ENCODE measurements at regions of chrX and their contacts with region 1.

Region 1: DNA sequence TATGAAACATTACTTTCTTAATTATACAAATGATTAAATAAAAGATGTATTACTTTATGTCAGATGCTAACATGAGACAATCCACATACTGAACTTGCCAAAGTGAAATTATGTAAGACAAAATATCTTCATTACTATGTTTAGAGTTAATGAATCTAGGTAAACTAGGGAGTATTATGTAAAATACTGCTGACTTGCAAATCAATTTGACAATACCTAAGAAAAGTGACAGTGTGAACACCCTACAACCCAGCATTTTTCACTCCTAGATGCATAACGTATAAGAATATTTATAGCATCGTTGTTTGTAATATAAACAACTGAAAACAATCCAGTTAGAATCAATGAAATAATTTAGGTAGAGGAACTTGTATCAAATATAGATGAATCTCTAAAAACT is 546.3 kb downstream of the MAGEB5 start:
- DNase-seq: no peak
- H3K4me3 ChIP-seq: no peak overlapping the region
- H3K27ac ChIP-seq: no peak overlapping the region
- H3K4me1 ChIP-seq: no peaks in the 10 kb centered on the region
- H3K27me3 ChIP-seq: no peaks in the 10 kb centered on the region
- CTCF ChIP-seq: no peak
- POLR2A ChIP-seq: no peak

Region 2: GRCh38 chrX:26778320-26778888 is 16.2 kb after region 1 on chrX:
- intact Hi-C with region 1: loop called (anchors 2 kb)
- DNase-seq: no peak
- H3K4me3 ChIP-seq: no peak overlapping the region
- H3K27ac ChIP-seq: no peak overlapping the region
- H3K4me1 ChIP-seq: no peaks in the 10 kb centered on the region
- H3K27me3 ChIP-seq: peaks cover 0 to 7% of the 10 kb centered on the region in 2 donors
- CTCF ChIP-seq: no peak
- POLR2A ChIP-seq: no peak

Measured in breast epithelium (tissue), 4 donors.